ENCODE measurements at regions of chr5 and their contacts with region 1.

Region 1: DNA sequence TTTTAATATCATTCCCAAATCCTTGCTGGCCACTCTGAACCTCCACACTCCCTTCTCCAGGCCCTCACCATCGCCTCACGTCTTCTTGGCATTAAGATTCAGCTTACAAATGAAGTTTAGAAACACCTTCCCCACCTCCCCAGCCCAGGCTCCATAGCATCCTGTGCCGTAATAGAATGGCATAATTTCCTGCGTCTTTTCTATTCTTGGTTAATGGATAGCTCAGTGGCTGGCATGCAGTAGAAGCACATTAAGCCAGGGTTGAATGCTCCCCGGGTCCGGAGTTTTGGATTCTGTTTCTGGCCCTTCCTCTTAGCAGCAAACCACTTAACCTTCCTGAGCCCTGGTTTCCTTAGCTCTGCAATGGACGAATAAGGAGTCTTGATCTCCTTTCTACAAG is 13.8 kb downstream of the WWC1 start:
- DNase-seq: no peak
- H3K4me3 ChIP-seq: no peak overlapping the region
- H3K27me3 ChIP-seq: no peaks in the 10 kb centered on the region
- CTCF ChIP-seq: no peak

Region 2: GRCh38 chr5:168291464-168291961 is 13.8 kb before region 1 on chr5 and contains the start of gene WWC1:
- CTCF ChIA-PET with region 1: interaction called, 17 read pairs
- POLR2A ChIA-PET with region 1: no interaction called
- DNase-seq: no peak
- H3K4me3 ChIP-seq: peak within 1 kb of the TSS; percentile 49
- H3K27me3 ChIP-seq: peaks cover 1% of the 10 kb centered on the region; the same call in 1 of the 2 replicates
- CTCF ChIP-seq: peak; percentile 14; the same call in 1 of the 2 replicates
- polyA plus RNA-seq, gene WWC1: 1.4 TPM in 2 replicates

Region 3: DNA sequence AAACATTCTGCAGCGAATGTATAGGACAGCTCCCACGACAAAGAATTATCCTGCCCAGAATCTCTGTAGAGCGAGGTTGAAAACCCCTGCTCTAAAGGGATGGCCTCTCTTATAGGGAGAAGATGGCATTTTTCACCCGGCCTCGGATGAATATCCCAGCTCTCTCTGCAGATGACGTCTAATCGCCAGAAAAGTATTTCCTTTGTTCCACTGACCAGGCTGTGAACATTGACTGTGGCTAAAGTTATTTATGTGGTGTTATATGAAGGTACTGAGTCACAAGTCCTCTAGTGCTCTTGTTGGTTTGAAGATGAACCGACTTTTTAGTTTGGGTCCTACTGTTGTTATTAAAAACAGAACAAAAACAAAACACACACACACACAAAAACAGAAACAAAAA is 163.6 kb after region 1 on chr5:
- CTCF ChIA-PET with region 1: no interaction called
- POLR2A ChIA-PET with region 1: no interaction called
- DNase-seq: peak; percentile 68
- H3K4me3 ChIP-seq: no peak overlapping the region
- H3K27me3 ChIP-seq: no peaks in the 10 kb centered on the region
- CTCF ChIP-seq: no peak

Measured in BJ (cell line).